ENCODE measurements at regions of chr3 and their contacts with region 1.

Region 1: GRCh38 chr3:71875461-71875947 is 90.6 kb upstream of the PROK2 start:
- DNase-seq: no peak
- H3K4me3 ChIP-seq: no peak overlapping the region
- H3K27me3 ChIP-seq: no peaks in the 10 kb centered on the region; the same call in 1 of the 2 replicates
- CTCF ChIP-seq: peak; percentile 92

Region 2: DNA sequence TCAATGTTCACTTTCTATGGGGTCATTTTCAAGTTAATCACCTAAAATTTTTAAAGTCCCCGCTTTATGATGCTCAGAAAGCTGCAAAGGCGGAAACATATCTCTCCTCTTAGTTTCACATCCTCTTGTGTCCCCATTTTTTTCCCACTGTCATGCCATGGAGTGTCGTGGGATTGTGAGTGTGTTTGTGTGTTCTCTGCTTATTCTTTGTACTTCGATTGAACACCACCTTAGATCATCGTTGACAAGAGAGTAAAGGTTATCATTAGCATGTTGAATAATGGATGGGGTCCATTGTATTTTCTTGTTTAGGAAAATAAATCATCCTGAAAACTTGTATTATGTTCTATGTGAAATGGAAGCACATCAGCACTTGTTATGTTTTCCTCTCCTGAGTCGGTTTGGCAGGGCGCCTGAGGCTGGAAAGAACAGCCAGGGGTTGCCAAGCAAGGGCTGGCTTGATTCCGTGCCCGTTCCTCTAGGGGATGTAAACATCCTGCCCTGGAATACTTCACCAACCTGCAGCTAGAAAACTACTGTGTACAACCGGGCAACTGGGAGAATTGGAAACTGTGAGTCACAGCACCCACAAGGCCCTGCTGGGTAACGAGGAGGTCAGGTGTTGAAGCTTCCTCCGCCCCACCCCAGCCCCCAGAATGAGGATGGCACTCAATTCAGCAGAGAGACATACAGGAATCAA is 217.5 kb before region 1 on chr3:
- CTCF ChIA-PET with region 1: no interaction called
- POLR2A ChIA-PET with region 1: no interaction called
- DNase-seq: no peak
- H3K4me3 ChIP-seq: no peak overlapping the region
- H3K27me3 ChIP-seq: no peaks in the 10 kb centered on the region
- CTCF ChIP-seq: no peak

Region 3: GRCh38 chr3:71725279-71725991 is 150.1 kb before region 1 on chr3 and contains the start of gene EIF4E3:
- CTCF ChIA-PET with region 1: interaction called, 11 read pairs
- POLR2A ChIA-PET with region 1: no interaction called
- DNase-seq: no peak
- H3K4me3 ChIP-seq: peak within 1 kb of the TSS; percentile 57
- H3K27me3 ChIP-seq: peaks cover 12% of the 10 kb centered on the region
- CTCF ChIP-seq: no peak
- polyA plus RNA-seq, gene EIF4E3: 1.1 and 2.8 TPM in 2 replicates

Region 4: GRCh38 chr3:71776538-71776937 is 99.0 kb before region 1 on chr3:
- CTCF ChIA-PET with region 1: no interaction called
- POLR2A ChIA-PET with region 1: no interaction called
- DNase-seq: no peak
- H3K4me3 ChIP-seq: no peak overlapping the region
- H3K27me3 ChIP-seq: no peaks in the 10 kb centered on the region
- CTCF ChIP-seq: no peak

Region 5: GRCh38 chr3:71838406-71838805 is 37.1 kb before region 1 on chr3:
- CTCF ChIA-PET with region 1: no interaction called
- POLR2A ChIA-PET with region 1: no interaction called
- DNase-seq: no peak
- H3K4me3 ChIP-seq: no peak overlapping the region
- H3K27me3 ChIP-seq: no peaks in the 10 kb centered on the region
- CTCF ChIP-seq: no peak

Region 6: DNA sequence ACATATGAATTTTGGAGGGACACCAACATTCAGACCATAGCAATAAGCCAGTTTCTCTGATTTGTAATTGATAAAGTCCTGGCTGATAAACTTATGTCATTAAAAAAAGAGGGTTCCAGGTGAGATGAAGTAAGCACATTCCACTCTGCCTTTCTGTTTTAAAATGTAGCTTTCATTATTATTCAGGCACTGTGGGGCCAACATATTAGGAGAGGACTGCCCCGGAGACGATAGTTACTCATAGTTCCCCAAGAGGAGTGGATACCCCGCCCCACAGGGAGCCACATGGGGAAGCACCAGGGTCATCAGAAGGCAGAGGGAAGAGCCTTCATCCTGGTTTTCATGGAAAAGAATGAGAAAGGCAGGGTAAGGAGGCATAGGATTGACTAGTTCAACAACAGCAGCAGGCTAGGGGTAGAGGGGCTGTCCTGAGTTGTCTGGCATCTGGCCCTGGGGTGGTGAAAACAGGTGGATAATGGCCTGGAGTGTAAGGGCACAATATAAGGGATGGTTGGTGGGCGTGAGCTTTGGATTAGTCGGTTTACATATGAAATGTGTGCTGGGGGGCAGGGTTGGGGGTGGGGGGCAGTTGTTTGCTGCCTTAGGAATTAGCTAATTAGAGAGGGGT is 11.8 kb before region 1 on chr3:
- CTCF ChIA-PET with region 1: interaction called, 10 read pairs
- POLR2A ChIA-PET with region 1: no interaction called
- DNase-seq: no peak
- H3K4me3 ChIP-seq: no peak overlapping the region
- H3K27me3 ChIP-seq: peaks cover 6% of the 10 kb centered on the region; the same call in 1 of the 2 replicates
- CTCF ChIP-seq: no peak

Region 7: GRCh38 chr3:72265256-72266015 is 389.9 kb after region 1 on chr3:
- CTCF ChIA-PET with region 1: interaction called, 24 read pairs
- POLR2A ChIA-PET with region 1: interaction called, 3 read pairs
- DNase-seq: no peak
- H3K4me3 ChIP-seq: no peak overlapping the region
- H3K27me3 ChIP-seq: peaks cover 7% of the 10 kb centered on the region
- CTCF ChIP-seq: peak; percentile 38

Region 8: GRCh38 chr3:73086071-73086494 is 1210.6 kb after region 1 on chr3:
- CTCF ChIA-PET with region 1: interaction called, 12 read pairs
- POLR2A ChIA-PET with region 1: no interaction called
- DNase-seq: no peak
- H3K4me3 ChIP-seq: no peak overlapping the region
- H3K27me3 ChIP-seq: no peaks in the 10 kb centered on the region
- CTCF ChIP-seq: peak; percentile 70

Measured in BJ (cell line).